GM13976 (cell line): ENCODE measurements at regions of chr2 and their contacts with region 1.

Region 1: DNA sequence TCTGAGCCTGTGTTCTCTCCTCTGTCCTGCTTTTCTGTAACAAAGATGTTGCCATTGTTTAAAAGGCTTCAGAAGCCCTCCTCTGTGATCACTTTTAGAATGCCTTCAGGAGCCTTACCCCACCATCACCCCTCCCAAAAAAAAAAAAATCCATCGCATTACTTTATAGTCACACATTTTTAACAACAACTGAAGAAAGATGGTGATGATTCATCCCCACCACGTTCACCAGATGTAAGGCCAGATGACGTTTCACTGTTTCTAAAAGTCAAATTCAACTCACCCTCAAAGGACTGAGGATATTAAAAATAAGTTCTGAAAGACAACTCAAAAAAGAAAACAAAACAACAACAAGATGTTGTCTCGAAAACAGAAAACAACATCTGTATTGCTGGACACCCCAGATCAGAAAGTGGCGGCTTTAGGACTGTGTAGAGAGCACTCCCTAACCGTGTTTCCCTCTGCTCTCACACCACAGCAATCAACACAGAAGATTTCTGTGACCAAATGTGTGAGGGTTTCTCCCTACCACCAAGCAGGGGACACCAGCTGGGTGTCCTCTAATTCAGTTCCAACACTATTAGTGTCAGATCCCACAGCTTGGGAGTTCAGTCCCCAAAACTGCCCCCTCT is 61.9 kb upstream of the CREB1 start:
- DNase-seq: no peak
- CTCF ChIP-seq: no peak

Region 2: DNA sequence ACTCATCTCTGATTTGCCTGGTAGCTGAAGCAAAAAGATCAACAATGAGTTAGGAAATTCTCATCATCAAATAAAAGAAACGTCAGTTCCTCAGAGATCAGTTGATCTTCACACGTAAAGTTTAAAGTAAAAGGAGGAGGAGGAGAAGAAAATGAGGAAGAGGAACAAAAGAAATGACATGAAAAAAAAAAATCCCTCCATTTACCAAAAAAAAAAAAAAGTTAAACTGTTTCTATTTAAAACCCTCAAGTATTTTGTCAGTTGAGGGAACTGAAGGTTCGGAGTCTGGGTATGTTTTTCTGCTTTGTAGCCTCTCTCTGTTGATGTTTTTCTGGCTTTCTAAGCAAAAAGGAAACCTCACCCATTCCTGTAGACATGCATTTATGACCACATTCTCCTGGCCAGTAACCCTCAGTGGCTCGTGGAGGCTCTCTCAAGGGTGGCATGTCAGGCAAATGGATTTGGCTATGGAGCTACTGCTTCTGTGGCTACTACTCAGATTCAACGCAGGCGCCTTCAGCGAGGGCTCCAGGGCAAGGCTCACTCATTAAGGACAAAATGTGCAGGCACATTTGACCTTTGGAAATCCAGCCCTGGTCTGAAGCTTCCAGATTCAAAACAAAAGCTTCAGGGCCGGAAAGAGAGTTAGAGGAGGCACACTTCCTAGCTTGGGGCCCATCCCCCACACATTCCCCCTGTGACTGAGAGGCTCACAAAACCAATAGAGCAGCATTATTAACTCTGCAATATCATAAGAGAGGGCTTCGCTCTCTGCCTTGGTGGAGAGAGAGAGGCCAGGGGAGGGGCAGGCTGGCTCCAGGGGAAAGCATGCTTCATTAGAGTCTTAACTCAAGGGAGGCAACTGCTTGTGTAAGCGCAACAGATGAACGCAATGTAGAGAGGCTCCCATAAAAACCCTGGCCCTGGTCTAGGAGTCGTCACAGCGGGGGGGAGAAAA is 324.3 kb before region 1 on chr2:
- in situ Hi-C with region 1: loop called (anchors 10 kb)
- DNase-seq: no peak
- CTCF ChIP-seq: no peak

Region 3: DNA sequence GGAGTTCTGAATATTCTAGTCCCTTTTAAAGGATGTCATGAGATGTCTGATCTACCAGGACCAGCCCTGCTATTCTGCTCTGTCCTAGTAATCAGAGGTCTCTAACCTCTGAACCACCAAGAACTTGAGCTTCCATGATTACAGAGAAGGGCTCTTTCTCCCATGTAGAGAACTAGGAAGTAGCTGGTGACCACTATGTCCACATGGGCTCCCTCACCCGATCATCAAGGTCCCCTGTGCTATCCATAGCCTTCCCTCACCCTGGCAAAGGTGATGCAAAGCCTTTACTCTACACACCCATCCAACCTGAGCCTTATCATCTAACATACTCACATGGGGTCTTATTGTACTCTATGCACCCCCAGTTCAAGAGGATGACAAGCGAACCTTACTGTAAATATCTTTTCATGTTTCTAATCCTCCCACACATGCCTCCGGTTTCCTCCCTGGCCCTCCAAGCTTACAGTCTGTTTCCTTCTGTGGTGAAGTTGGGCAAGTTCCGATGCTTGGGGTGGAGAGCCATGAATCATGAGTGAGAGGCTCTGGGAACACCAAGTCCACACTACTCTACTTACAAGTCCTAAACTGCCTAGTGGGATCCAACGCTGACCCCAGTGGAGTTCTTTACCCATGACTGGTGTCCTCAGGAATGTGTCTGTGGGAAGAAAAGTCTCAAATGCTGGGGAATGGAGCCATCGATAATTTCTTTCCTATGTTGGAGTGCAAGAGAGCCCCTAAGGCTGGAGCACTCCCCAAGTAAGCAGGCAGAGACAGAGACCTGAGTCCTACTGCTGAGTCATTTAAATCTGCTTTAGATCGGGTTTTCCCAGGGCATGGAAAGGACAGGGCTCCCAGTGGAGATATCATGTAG is 228.8 kb before region 1 on chr2:
- in situ Hi-C with region 1: no loop called
- DNase-seq: no peak
- CTCF ChIP-seq: no peak

Region 4: GRCh38 chr2:207724113-207724512 is 256.3 kb after region 1 on chr2:
- in situ Hi-C with region 1: no loop called
- DNase-seq: no peak
- CTCF ChIP-seq: no peak

Region 5: DNA sequence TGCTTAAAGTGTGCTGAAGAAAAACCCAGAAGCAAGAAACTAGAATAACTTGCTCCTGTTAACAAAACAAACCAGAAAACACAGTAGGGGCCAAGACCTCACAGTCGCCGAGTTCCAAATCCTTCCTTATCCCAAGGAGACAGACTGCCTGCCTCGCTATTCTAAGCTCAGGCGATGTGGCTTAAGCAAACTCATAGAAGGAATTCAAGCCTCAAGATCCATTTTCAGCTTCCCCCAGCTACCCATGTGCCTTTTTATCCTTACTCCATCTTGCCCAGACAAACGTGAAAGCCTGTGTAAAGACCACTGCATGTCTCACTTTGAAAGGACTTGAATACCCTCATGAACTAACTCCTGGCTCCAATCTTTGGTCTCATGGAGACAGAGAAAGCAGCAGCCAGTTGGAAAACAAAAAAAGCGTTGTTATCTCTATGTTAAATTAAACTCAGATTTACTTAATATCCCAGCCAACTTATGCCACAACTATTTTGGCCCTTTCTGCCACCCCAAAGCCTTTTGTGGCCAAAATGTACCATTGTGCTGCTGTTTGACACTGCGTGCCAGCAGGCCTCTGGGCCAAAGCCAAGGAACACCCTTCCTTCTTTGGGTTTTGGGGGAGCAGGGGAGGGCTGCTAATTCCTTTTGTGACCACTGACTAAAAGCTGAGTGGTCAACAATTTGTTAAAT is 425.0 kb after region 1 on chr2:
- in situ Hi-C with region 1: no loop called
- DNase-seq: no peak
- CTCF ChIP-seq: no peak